ENCODE measurements at regions of chr17 and their contacts with region 1.

Region 1: GRCh38 chr17:60065136-60065535 is 13.6 kb downstream of the HEATR6 start:
- DNase-seq: no peak
- H3K4me3 ChIP-seq: no peak overlapping the region
- H3K27ac ChIP-seq: no peak overlapping the region
- H3K27me3 ChIP-seq: no peaks in the 10 kb centered on the region
- CTCF ChIP-seq: no peak

Region 2: GRCh38 chr17:59941131-59941530 is 124.0 kb before region 1 on chr17:
- in situ Hi-C with region 1: loop called (anchors 25 kb)
- DNase-seq: no peak
- H3K4me3 ChIP-seq: no peak overlapping the region
- H3K27ac ChIP-seq: no peak overlapping the region
- H3K27me3 ChIP-seq: no peaks in the 10 kb centered on the region
- CTCF ChIP-seq: no peak

Region 3: DNA sequence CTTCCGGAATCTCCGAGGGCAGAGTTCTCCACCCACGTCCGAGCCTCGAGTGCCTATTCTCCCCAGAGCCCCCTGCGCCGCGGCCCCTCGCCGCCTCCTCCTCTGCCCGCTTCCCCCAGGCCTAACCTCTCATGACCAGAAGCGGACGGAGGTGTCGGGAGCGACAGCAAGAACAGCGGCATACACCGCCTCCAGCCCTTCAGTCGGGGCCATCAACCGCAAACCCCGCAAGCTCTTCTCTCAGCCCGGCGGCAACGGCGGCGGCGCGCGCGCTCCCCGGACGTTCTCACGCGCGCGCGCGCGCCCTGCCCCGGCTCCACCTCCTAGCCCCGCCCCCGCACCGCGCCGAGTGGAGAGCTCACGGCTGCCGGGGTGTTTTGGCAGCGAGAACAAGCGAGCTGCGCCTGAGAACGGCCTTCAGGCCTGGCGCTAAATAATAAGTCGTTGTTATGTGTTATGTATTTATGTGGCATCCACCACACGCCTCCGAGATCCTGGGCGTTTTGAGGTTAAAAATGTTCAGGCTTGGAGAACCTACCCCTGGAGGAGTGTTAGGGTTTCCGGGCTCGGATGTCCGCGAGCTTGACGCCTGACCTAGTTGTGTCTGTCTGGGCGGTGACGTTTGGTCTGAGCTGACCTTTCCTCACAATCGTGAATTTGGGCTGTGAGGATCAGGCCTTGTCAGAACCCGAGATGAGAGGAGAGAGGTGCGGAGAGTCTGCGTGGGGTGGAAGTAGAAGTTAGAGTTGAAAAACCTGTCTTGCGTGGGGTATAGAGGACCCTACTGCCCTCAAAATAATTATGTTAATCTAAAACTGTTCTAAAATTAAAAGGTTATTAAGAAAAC is 100.4 kb before region 1 on chr17 and contains the start of gene RNFT1:
- in situ Hi-C with region 1: no loop called
- DNase-seq: peak; percentile 80
- H3K4me3 ChIP-seq: peak within 1 kb of the TSS; percentile 87
- H3K27ac ChIP-seq: peak within 1 kb of the TSS; percentile 82
- H3K27me3 ChIP-seq: no peaks in the 10 kb centered on the region
- CTCF ChIP-seq: no peak

Region 4: GRCh38 chr17:60231234-60231633 is 166.1 kb after region 1 on chr17:
- in situ Hi-C with region 1: no loop called
- DNase-seq: peak; percentile 32
- H3K4me3 ChIP-seq: no peak overlapping the region
- H3K27ac ChIP-seq: no peak overlapping the region
- H3K27me3 ChIP-seq: no peaks in the 10 kb centered on the region
- CTCF ChIP-seq: peak; percentile 61

Region 5: GRCh38 chr17:60506312-60506711 is 441.2 kb after region 1 on chr17:
- in situ Hi-C with region 1: no loop called
- DNase-seq: peak; percentile 68
- H3K4me3 ChIP-seq: no peak overlapping the region
- H3K27ac ChIP-seq: peak overlapping the region; percentile 80
- H3K27me3 ChIP-seq: no peaks in the 10 kb centered on the region
- CTCF ChIP-seq: no peak